H1 (cell line): ENCODE measurements at regions of chr11 and their contacts with region 1.

Region 1: GRCh38 chr11:506238-506994 is 626 bp downstream of the RNH1 start:
- DNase-seq: peak; percentile 91 to 98
- H3K4me3 ChIP-seq: peak overlapping the region; percentile 76 to 96 (median 87)
- H3K27ac ChIP-seq: peak overlapping the region; percentile 96
- H3K4me1 ChIP-seq: peaks cover 0 to 9% (median 2%) of the 10 kb centered on the region in 4 experiments; a peak in 3 of 7 replicates
- H3K27me3 ChIP-seq: no peaks in the 10 kb centered on the region
- CTCF ChIP-seq: 0 out of 4 replicates have a peak, but pooled peaks of 1 of the 3 experiments have one; percentile 5
- EP300 ChIP-seq: peak in 1 of 2 experiments; percentile 75; a peak in 1 of 3 replicates
- POLR2A ChIP-seq: 0 out of 3 replicates have a peak, but pooled peaks of 1 of the 2 experiments have one; percentile 32
- RAD21 ChIP-seq: no peak

Region 2: GRCh38 chr11:369336-370018 is 136.9 kb before region 1 on chr11 and contains the start of gene B4GALNT4:
- CTCF ChIA-PET with region 1: no interaction called
- POLR2A ChIA-PET with region 1: no interaction called
- DNase-seq: no peak
- H3K4me3 ChIP-seq: peak within 1 kb of the TSS; percentile 70 to 78 (median 74)
- H3K27ac ChIP-seq: peak within 1 kb of the TSS; percentile 45
- H3K4me1 ChIP-seq: peaks cover 0 to 10% (median 6%) of the 10 kb centered on the region in 4 experiments; a peak in 6 of 7 replicates
- H3K27me3 ChIP-seq: peaks cover 0 to under 1% (median under 1%) of the 10 kb centered on the region in 4 experiments; a peak in 1 of 7 replicates
- CTCF ChIP-seq: no peak
- EP300 ChIP-seq: no peak
- POLR2A ChIP-seq: no peak
- RAD21 ChIP-seq: no peak
- total RNA-seq, gene B4GALNT4: 76.3 and 89.0 TPM in 2 replicates

Region 3: GRCh38 chr11:494761-495536 is 11.5 kb before region 1 on chr11:
- CTCF ChIA-PET with region 1: no interaction called
- POLR2A ChIA-PET with region 1: interaction called, 41 read pairs
- DNase-seq: peak in 1 of 2 experiments; percentile 46
- H3K4me3 ChIP-seq: no peak overlapping the region
- H3K27ac ChIP-seq: no peak overlapping the region
- H3K4me1 ChIP-seq: no peaks in the 10 kb centered on the region
- H3K27me3 ChIP-seq: no peaks in the 10 kb centered on the region
- CTCF ChIP-seq: no peak
- EP300 ChIP-seq: no peak
- POLR2A ChIP-seq: no peak
- RAD21 ChIP-seq: no peak

Region 4: DNA sequence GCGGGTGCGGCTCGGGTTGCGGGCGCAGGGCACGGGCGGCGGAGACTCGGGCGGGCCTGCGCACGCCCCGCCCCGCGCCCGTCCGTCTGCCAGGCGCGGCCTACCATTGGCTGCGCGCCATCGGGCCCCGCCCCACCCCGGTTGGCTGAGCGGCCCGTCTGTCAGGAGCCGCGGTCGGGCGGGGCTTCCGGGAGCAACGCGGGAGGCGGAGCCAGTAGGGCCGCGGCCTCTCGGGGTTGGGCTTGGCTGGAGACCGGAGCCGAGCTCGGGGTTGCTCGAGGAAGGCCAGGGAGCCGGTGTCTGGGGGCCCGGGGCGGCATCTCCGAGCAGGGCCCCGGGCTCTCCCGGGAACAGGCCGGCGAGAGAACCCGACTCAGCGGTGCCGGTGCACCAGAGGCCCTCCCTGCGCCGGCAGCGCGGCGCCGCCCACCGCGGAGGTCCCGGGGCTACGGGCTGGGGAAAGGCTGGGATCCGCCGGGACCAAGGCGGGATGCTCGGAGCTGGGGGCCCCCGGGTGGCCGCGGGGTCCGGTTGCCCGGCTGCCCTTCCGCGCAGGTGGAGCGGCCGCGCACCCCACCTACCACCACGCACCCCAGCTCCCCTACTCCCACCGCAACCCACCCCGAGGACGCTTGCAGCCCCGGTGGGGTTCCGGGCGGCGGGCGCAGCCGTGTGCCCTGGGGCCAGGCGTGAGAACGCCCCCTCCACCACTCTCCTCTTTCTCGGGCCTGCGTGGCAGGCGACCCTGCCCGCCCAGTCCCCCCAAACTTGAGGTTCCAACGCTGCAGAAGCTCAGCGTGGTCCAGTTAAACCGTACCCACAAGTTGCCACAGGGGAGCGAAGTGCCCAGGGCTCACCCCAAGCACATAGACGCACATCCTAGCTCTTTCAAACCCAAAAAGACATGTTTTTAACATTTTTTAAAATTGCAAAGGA is 29.4 kb after region 1 on chr11 and contains the start of gene HRAS:
- CTCF ChIA-PET with region 1: no interaction called
- POLR2A ChIA-PET with region 1: interaction called, 10 read pairs
- DNase-seq: peak; percentile 70 to 94
- H3K4me3 ChIP-seq: peak within 1 kb of the TSS; percentile 67 to 81 (median 74)
- H3K27ac ChIP-seq: 0 out of 2 replicates have a peak within 1 kb of the TSS, but pooled peaks have one; percentile 30
- H3K4me1 ChIP-seq: peaks cover 0 to 19% (median 10%) of the 10 kb centered on the region in 4 experiments; a peak in 5 of 7 replicates
- H3K27me3 ChIP-seq: peaks cover 0 to 16% (median 6%) of the 10 kb centered on the region in 4 experiments; a peak in 5 of 7 replicates
- CTCF ChIP-seq: peak in 1 of 3 experiments; percentile 20; a peak in 1 of 4 replicates
- EP300 ChIP-seq: no peak
- POLR2A ChIP-seq: peak in 1 of 2 experiments; percentile 51; a peak in 1 of 3 replicates
- RAD21 ChIP-seq: no peak
- total RNA-seq, gene HRAS: 54.7 and 60.9 TPM in 2 replicates

Region 5: DNA sequence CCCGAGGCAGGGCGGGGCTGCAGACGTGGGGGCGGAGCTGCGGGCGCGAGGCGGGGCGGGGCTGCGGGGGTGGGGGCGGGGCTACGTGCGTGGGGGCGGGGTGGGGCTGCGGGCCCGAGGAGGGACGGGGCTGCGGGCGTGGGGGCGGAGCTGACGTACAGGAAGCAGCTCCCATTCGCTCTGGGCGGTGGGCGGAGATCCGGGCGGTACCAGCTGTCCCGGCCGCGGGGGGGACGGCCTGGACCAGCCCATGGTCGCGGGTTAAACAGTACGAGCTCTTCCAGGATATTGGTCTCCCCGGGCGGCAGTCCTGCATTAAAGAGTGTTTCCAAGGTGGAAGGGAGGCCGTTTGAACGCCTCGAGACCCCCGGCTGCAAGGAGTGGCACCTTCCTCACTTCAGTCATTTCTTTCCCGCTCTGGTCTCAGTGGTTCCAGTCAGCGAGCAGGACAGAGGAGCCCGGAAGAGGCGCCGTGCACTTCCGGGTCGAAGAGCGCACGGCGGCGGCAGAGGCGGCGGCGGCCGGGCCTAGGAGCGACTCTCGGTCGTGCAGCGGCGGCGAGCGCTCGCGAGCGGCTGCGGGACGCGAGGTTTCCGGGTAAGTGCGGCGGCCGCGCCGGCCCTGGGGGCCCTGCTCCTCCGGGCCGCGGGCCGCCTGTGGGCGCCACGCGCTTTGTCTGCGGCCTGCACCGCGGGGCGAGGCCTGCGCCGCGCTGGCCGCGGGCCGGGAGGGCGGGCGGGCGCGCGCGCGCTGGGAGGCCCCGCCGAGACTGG is 69.8 kb after region 1 on chr11 and contains the start of gene PHRF1:
- CTCF ChIA-PET with region 1: no interaction called
- POLR2A ChIA-PET with region 1: no interaction called
- DNase-seq: peak; percentile 75 to 96
- H3K4me3 ChIP-seq: peak within 1 kb of the TSS; percentile 87 to 99 (median 88)
- H3K27ac ChIP-seq: peak within 1 kb of the TSS; percentile 100
- H3K4me1 ChIP-seq: peaks cover 6 to 25% (median 15%) of the 10 kb centered on the region in 4 experiments
- H3K27me3 ChIP-seq: peaks cover 8 to 17% (median 13%) of the 10 kb centered on the region in 4 experiments
- CTCF ChIP-seq: no peak
- EP300 ChIP-seq: peak in 1 of 2 experiments; percentile 99; a peak in 2 of 3 replicates
- POLR2A ChIP-seq: peak in 1 of 2 experiments; percentile 92; a peak in 2 of 3 replicates
- RAD21 ChIP-seq: no peak; a peak in 1 of 4 replicates
- total RNA-seq, gene PHRF1: 37.3 and 39.8 TPM in 2 replicates